Heart right ventricle (tissue), 16 donors: ENCODE measurements at regions of chr3 and their contacts with region 1.

Region 1: GRCh38 chr3:29186982-29187725 is 93.7 kb upstream of the RBMS3 start:
- DNase-seq: no peak
- ATAC-seq: no peak
- H3K4me3 ChIP-seq: no peak overlapping the region
- H3K27ac ChIP-seq: peak overlapping the region in 1 of 10 donors; percentile 0
- H3K4me1 ChIP-seq: peaks cover 0 to 11% (median 6%) of the 10 kb centered on the region in 9 donors
- H3K27me3 ChIP-seq: no peaks in the 10 kb centered on the region
- CTCF ChIP-seq: no peak

Region 2: DNA sequence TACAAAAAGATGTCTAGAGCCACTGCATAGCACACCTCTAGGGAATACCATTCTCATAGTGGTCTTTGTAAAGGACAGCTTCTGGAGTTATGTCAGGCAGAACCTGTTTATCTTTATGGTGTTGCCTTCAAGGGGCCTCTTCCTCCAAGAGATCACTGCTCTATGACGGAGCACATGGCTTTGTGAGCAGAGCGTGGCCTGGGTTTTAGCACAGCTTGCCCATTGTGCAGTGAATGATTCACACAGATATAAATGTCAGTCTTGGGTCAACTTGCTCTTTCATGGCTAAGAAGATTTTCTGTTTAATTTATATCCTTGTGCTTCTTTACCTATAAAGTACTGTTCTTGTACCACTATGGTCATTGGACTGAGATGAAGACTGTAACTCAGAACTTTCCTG is 52.2 kb after region 1 on chr3:
- intact Hi-C with region 1: loop called in 1 of 10 experiments (anchors 10 kb)
- DNase-seq: no peak
- ATAC-seq: no peak
- H3K4me3 ChIP-seq: no peak overlapping the region
- H3K27ac ChIP-seq: no peak overlapping the region
- H3K4me1 ChIP-seq: peaks cover 0 to 30% (median 0%) of the 10 kb centered on the region in 9 donors
- H3K27me3 ChIP-seq: no peaks in the 10 kb centered on the region
- CTCF ChIP-seq: no peak